Activated CD4-positive, alpha-beta T cell treated with anti-CD3 and anti-CD28 coated beads, Interleukin-2, amount 10 ng/mL, durations not matched to agents 24 days and 14 days (primary cell): ENCODE measurements at regions of chr14 and their contacts with region 1.

Region 1: DNA sequence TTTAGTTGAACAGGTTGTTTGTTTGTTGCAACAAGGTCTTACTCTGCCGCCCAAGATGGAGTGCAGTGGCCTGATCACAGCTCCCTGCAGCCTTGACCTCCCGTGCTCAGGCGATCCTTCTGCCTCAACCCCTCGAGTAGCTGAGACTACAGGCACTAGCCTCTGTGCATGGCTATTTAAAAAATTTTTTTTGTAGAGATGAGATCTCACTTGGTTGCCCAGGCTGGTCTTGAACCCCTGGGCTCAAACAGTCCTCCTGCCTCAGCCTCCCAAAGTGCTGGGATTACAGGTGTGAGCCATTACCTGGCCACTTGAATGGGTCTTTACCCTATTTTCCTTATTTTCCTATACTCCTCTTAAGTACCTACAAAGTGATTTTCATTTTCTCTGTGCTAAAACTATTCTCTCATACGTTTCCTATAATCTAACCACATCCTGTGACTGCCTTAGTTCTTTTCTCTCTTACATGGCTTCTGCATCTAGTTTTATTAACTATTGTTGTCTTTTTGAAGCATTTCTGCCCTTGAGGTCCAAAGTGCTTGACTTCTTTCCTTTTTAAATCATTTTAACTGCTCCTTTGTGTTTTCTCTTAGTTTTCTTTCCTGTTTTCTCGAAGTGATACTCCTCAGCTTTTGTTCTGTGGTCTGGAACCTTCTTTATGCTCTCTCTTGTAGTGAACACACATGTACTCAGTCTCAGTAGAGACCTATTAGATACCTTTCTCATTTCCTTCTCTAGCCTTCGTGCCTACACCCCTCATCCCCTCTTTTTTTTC is 14.1 kb downstream of the GPX2 start:
- DNase-seq: peak; percentile 75
- H3K4me3 Mint-ChIP-seq: no peak overlapping the region
- H3K27ac Mint-ChIP-seq: no peak overlapping the region
- H3K4me1 Mint-ChIP-seq: peaks cover 28% of the 10 kb centered on the region
- H3K27me3 Mint-ChIP-seq: no peaks in the 10 kb centered on the region

Region 2: DNA sequence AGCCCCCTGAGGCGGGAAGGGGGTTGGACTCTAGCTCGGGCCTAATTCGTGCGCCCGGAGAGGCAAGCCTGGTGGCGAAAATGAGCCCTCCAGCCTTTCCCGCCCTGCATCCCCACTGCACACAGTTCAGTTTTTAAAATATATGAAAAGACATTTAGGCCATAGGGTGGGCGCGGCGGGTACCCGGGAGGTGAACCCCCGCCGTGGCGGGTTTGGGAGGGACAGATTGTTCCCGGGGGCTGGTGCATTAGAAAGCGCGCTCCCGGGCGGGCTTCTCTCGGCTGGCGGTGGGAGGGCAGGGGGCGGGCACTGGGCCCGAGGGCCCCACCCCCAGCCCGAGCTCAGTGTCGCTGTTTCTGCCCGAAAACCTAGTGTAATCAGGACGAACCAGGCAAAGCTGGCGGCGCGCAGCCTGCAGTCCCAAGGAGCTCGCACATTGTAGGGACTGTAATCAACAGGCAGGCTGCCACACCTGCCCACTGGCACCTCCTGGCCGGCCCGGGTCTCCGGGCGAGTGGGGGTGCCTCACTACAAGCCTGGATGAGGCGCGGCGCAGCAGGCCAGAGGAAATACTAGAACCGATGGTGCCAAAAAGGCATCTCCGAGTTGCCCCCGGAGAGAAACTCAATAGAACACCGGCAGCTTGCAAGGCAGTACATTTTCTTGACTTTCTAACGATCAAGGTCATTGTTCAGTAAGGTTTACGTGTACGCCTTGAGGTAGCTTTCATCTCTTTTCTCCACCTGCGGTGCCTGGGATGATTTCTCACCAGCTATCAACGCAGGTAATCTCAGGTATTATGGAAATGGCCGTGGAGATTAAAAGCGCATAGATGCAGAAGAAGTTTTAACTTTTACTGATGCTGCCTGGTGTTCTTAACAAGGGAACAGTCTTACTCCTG is 48.0 kb before region 1 on chr14:
- intact Hi-C with region 1: loop called (anchors 1 kb)
- DNase-seq: peak; percentile 89
- H3K4me3 Mint-ChIP-seq: peak overlapping the region; percentile 85
- H3K27ac Mint-ChIP-seq: no peak overlapping the region
- H3K4me1 Mint-ChIP-seq: peaks cover 12% of the 10 kb centered on the region
- H3K27me3 Mint-ChIP-seq: peaks cover 74% of the 10 kb centered on the region

Region 3: DNA sequence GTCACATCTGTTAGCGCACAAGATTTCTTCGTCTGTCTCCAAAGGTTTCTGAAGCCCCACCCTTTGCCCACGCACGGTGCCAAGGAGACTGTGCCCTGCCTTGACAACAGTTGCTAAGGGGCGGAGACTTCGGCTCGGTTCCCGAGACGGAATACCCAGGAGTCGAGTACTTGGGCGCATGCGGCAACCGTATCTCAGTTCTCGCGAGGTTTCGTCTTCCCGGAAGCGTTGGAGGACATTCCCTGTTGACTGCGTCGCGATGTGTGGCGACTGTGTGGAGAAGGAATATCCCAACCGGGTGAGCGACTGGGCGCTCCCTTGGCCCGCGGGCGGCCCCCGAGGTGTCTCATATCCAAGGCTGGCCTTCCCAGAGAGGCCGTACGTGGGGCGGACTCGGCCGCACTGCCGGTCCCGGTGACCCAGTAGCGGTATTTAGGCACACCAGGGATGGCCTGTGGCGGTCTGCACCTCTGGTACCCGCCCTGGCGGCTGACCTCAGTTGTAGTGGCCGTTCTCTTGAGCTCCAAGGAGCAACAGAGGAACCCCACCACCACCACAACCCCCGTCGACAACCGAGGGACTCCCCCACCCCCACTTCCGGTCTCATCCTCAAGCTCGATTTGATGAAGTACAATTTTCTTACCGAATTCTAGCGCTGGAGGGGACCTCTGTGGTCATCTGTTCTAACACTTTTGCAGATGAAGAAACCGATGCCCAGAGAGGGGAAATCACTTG is 14.0 kb before region 1 on chr14 and contains the start of gene CHURC1:
- intact Hi-C with region 1: loop called (anchors 1 kb)
- DNase-seq: peak; percentile 99
- H3K4me3 Mint-ChIP-seq: peak within 1 kb of the TSS; percentile 85
- H3K27ac Mint-ChIP-seq: peak within 1 kb of the TSS; percentile 95
- H3K4me1 Mint-ChIP-seq: peaks cover 44% of the 10 kb centered on the region
- H3K27me3 Mint-ChIP-seq: peaks cover 14% of the 10 kb centered on the region
- total RNA-seq, gene CHURC1: 53.5 and 54.9 TPM in 2 replicates

Region 4: GRCh38 chr14:64942531-64943111 is 14.2 kb after region 1 on chr14 and contains the start of gene GPX2:
- intact Hi-C with region 1: no loop called
- DNase-seq: no peak
- H3K4me3 Mint-ChIP-seq: no peak within 1 kb of the TSS
- H3K27ac Mint-ChIP-seq: peak within 1 kb of the TSS; percentile 2
- H3K4me1 Mint-ChIP-seq: peaks cover 42% of the 10 kb centered on the region
- H3K27me3 Mint-ChIP-seq: no peaks in the 10 kb centered on the region
- total RNA-seq, gene GPX2: not detected in 2 replicates

Region 5: GRCh38 chr14:64971943-64972791 is 43.7 kb after region 1 on chr14 and contains the start of gene RAB15:
- intact Hi-C with region 1: loop called (anchors 5 kb)
- DNase-seq: peak; percentile 85
- H3K4me3 Mint-ChIP-seq: peak within 1 kb of the TSS; percentile 86
- H3K27ac Mint-ChIP-seq: peak within 1 kb of the TSS; percentile 81
- H3K4me1 Mint-ChIP-seq: peaks cover 7% of the 10 kb centered on the region
- H3K27me3 Mint-ChIP-seq: peaks cover 13% of the 10 kb centered on the region
- total RNA-seq, gene RAB15: 6.2 and 6.9 TPM in 2 replicates